Ascending aorta (tissue), 2 donors: ENCODE measurements at regions of chr22 and their contacts with region 1.

Region 1: GRCh38 chr22:30634471-30635233 is 929 bp upstream of the SLC35E4 start:
- DNase-seq: peak; percentile 65 to 92
- H3K4me3 ChIP-seq: peak overlapping the region; percentile 70 to 90
- H3K27ac ChIP-seq: peak overlapping the region; percentile 97 to 98
- H3K4me1 ChIP-seq: peaks cover 21 to 32% of the 10 kb centered on the region in 2 donors
- H3K27me3 ChIP-seq: no peaks in the 10 kb centered on the region
- CTCF ChIP-seq: peak; percentile 93 to 95 (median 95)

Region 2: DNA sequence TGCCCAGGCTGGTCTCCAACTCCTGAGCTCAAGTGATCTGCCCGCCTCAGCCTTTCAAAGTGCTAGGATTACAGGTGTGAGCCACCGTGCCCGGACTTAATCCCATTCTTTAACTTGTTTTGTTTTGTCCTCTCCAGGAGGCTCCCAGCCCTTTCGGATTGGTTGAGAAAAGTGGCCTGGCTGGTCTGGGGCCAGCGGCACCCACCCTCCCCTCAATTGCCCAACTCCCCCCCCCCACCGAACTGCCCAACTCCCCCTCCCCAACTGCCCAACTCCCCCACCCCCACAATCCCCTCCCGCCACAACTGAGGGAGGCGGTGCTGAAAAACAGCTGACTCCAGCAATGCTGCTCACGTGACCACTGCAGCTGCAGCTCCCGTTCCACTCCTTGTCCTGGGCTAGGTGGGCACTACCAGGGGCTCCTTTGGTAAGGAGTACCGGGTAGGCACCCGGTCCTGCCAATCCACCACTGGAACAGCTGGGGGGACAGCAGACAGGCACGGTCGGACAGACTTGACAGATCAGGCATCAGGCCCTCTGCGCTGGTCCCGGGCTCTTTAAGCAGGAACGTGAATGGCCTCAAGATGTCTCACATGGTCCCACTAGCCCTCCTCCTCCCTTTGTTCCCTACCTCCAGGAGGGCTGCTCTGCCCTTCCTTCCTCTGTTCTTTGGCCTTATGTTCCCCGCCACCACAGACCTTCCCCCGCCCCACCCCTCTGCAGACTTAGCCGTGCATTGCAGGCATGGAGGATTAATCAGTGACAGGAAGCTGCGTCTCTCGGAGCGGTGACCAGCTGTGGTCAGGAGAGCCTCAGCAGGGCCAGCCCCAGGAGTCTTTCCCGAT is 28.0 kb before region 1 on chr22 and contains the start of gene TCN2:
- intact Hi-C with region 1: loop called (anchors 2 kb)
- DNase-seq: peak; percentile 24 to 83
- H3K4me3 ChIP-seq: peak within 1 kb of the TSS; percentile 69 to 76
- H3K27ac ChIP-seq: peak within 1 kb of the TSS; percentile 60 to 63
- H3K4me1 ChIP-seq: peaks cover 5 to 13% of the 10 kb centered on the region in 2 donors
- H3K27me3 ChIP-seq: no peaks in the 10 kb centered on the region
- CTCF ChIP-seq: no peak
- total RNA-seq, gene TCN2: 56.8 TPM

Region 3: DNA sequence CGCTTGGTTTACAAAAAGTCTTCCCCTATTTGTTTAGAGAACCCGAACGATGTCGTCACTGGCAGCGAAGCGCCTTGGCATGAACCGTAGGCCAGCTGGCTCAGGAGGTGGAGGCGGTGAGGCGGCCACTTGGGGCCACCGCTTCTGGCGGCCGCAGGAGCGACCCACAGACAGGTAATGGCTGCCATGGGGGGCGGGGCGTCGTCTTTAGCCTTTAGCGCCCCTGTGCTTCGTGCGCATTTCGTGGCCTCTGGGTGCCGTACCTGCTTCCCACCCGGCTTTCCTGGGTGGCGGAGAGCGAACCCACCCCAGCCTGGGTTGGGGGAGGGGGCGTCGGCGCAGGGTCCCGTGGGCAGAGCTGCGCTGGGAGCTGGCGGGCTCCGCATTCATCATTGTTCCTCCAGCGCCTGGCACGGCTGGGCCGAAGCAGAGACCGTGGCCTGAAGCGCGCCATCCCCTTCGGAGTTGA is 59.6 kb after region 1 on chr22:
- intact Hi-C with region 1: loop called (anchors 2 kb)
- DNase-seq: peak in 1 of 2 donors; percentile 67
- H3K4me3 ChIP-seq: peak overlapping the region; percentile 62 to 69
- H3K27ac ChIP-seq: no peak overlapping the region
- H3K4me1 ChIP-seq: peaks cover 0 to 8% of the 10 kb centered on the region in 2 donors
- H3K27me3 ChIP-seq: no peaks in the 10 kb centered on the region
- CTCF ChIP-seq: no peak

Region 4: GRCh38 chr22:30920407-30920806 is 285.8 kb after region 1 on chr22:
- intact Hi-C with region 1: loop called (anchors 1 kb)
- DNase-seq: peak in 1 of 2 donors; percentile 82
- H3K4me3 ChIP-seq: peak overlapping the region in 1 of 2 donors; percentile 64
- H3K27ac ChIP-seq: no peak overlapping the region
- H3K4me1 ChIP-seq: peaks cover 0 to 3% of the 10 kb centered on the region in 2 donors
- H3K27me3 ChIP-seq: no peaks in the 10 kb centered on the region
- CTCF ChIP-seq: peak; percentile 83 to 96 (median 88)

Region 5: GRCh38 chr22:31148953-31149627 is 514.4 kb after region 1 on chr22:
- intact Hi-C with region 1: loop called (anchors 2 kb)
- DNase-seq: peak in 1 of 2 donors; percentile 87
- H3K4me3 ChIP-seq: no peak overlapping the region
- H3K27ac ChIP-seq: peak overlapping the region; percentile 71 to 81
- H3K4me1 ChIP-seq: peaks cover 5 to 13% of the 10 kb centered on the region in 2 donors
- H3K27me3 ChIP-seq: no peaks in the 10 kb centered on the region
- CTCF ChIP-seq: peak; percentile 90 to 93 (median 90)